H1 (cell line): ENCODE measurements at regions of chr17 and their contacts with region 1.

Region 1: DNA sequence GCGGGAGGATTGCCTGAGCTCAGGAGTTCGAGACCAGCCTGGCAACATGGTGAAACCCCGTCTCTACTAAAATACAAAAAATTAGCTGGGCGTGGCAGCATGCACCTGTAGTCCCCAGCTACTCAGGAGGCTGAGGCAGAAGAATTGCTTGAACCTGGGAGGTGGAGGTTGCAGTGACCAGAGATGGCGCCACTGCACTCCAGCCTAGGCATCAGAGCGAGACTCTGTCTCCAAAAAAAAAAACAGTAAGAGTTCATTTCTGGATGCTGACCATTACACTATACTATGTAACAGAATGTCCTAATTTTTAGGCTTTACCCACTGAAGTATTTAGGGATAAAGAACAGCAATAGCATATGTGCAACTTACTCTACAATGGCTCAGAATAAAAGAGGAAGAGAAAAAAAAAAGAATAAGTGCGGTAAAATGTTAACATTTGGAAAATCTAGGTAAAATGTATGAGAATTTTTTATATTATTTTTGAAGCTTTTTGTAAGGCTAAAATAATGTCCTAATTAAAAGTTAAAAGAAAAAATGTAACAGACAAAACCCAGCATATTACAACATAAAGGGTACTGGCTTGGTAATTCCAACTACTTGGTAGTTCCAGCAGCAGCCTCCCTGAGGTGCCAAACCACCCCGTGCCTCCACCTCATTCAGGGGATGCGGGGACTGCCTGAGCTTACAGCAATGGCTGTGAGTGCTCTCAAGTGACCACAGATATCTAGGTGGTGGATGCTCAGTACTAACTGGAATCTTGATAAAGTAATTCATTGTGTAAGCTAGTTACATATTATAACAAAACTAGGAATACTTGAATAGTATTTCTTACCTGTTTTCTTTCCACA is 10.9 kb downstream of the COPS3 start:
- DNase-seq: peak in 1 of 2 experiments; percentile 57
- H3K4me3 ChIP-seq: no peak overlapping the region
- H3K27ac ChIP-seq: no peak overlapping the region
- H3K4me1 ChIP-seq: no peaks in the 10 kb centered on the region
- H3K27me3 ChIP-seq: no peaks in the 10 kb centered on the region
- CTCF ChIP-seq: peak; percentile 50 to 70 (median 59)
- EP300 ChIP-seq: no peak
- POLR2A ChIP-seq: no peak
- RAD21 ChIP-seq: peak; percentile 47 to 48

Region 2: GRCh38 chr17:17258998-17259397 is 11.2 kb before region 1 on chr17:
- CTCF ChIA-PET with region 1: interaction called, 16 read pairs
- POLR2A ChIA-PET with region 1: no interaction called
- DNase-seq: no peak
- H3K4me3 ChIP-seq: no peak overlapping the region
- H3K27ac ChIP-seq: no peak overlapping the region
- H3K4me1 ChIP-seq: no peaks in the 10 kb centered on the region
- H3K27me3 ChIP-seq: no peaks in the 10 kb centered on the region
- CTCF ChIP-seq: no peak
- EP300 ChIP-seq: no peak
- POLR2A ChIP-seq: no peak
- RAD21 ChIP-seq: no peak

Region 3: GRCh38 chr17:17280613-17281549 is 10.7 kb after region 1 on chr17 and contains the start of gene COPS3:
- CTCF ChIA-PET with region 1: interaction called, 23 read pairs
- POLR2A ChIA-PET with region 1: interaction called, 10 read pairs
- DNase-seq: peak; percentile 86 to 96
- H3K4me3 ChIP-seq: peak within 1 kb of the TSS; percentile 88 to 96 (median 92)
- H3K27ac ChIP-seq: peak within 1 kb of the TSS; percentile 96
- H3K4me1 ChIP-seq: peaks cover 0 to 6% (median 4%) of the 10 kb centered on the region in 4 experiments; a peak in 3 of 7 replicates
- H3K27me3 ChIP-seq: no peaks in the 10 kb centered on the region
- CTCF ChIP-seq: peak in 1 of 3 experiments; percentile 16; a peak in 1 of 4 replicates
- EP300 ChIP-seq: 0 out of 3 replicates have a peak, but pooled peaks of 1 of the 2 experiments have one; percentile 11
- POLR2A ChIP-seq: peak; percentile 93 to 98
- RAD21 ChIP-seq: no peak
- total RNA-seq, gene COPS3: 110 and 112 TPM in 2 replicates

Region 4: GRCh38 chr17:17313350-17313991 is 43.3 kb after region 1 on chr17:
- CTCF ChIA-PET with region 1: interaction called, 14 read pairs
- POLR2A ChIA-PET with region 1: interaction called, 3 read pairs
- DNase-seq: peak; percentile 58 to 79
- H3K4me3 ChIP-seq: no peak overlapping the region
- H3K27ac ChIP-seq: no peak overlapping the region
- H3K4me1 ChIP-seq: 0 out of 7 replicates have a peak, but pooled peaks cover 0 to 3% (median under 1%) of the 10 kb centered on the region in 4 experiments
- H3K27me3 ChIP-seq: no peaks in the 10 kb centered on the region
- CTCF ChIP-seq: peak; percentile 57 to 83 (median 81)
- EP300 ChIP-seq: no peak
- POLR2A ChIP-seq: no peak
- RAD21 ChIP-seq: peak; percentile 63 to 70

Region 5: DNA sequence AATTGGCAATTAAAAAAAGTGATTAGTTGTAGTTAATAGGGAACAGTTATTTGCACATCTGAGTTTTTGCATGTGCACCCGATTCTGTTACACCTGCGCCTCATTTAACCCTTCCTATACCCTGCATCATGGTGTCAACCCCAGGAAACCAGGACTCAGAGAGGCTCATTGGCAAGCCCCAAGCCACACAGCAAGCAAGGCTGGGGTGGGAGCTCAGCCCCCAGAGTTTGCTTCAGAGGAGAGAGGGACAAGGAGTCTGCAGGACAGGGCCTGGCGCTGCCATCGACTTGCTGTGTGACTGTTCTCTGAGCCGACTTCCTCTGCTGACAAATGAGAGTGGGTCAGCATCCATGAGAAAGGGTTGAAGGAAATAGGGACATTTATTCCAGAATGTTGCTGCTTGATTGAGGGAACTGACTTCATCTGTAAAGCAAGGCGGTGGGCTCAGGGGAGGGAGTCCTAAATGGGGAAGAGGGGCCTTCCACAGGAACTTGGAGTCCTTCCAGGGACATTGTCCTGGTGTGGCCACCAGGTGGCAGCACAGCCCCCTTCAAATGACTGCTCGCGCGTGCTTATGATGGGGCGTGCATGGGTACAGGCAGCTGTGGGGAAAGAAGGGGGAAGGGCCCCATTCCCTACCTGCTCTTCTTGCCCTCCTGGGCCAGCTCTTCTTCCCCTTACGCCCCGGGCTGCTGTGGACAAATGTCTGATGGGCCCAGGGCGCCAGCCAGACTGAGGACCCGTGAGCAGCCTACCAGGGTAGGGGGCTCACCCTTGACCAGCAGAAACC is 84.6 kb after region 1 on chr17:
- CTCF ChIA-PET with region 1: no interaction called
- POLR2A ChIA-PET with region 1: no interaction called
- DNase-seq: peak; percentile 67 to 88
- H3K4me3 ChIP-seq: no peak overlapping the region
- H3K27ac ChIP-seq: no peak overlapping the region
- H3K4me1 ChIP-seq: peaks cover 0 to 18% (median 9%) of the 10 kb centered on the region in 4 experiments; a peak in 5 of 7 replicates
- H3K27me3 ChIP-seq: no peaks in the 10 kb centered on the region
- CTCF ChIP-seq: peak; percentile 79 to 96 (median 86)
- EP300 ChIP-seq: no peak
- POLR2A ChIP-seq: no peak
- RAD21 ChIP-seq: peak; percentile 78 to 84

Region 6: GRCh38 chr17:17511881-17512858 is 242.0 kb after region 1 on chr17:
- CTCF ChIA-PET with region 1: no interaction called
- POLR2A ChIA-PET with region 1: no interaction called
- DNase-seq: no peak
- H3K4me3 ChIP-seq: no peak overlapping the region
- H3K27ac ChIP-seq: no peak overlapping the region
- H3K4me1 ChIP-seq: peaks cover 4 to 24% (median 12%) of the 10 kb centered on the region in 4 experiments
- H3K27me3 ChIP-seq: no peaks in the 10 kb centered on the region
- CTCF ChIP-seq: no peak
- EP300 ChIP-seq: no peak
- POLR2A ChIP-seq: no peak
- RAD21 ChIP-seq: no peak